ENCODE measurements at regions of chr22 and their contacts with region 1.

Region 1: GRCh38 chr22:44666207-44666585 is 35.8 kb upstream of the PRR5 start:
- DNase-seq: no peak
- H3K4me3 ChIP-seq: no peak overlapping the region
- H3K27ac ChIP-seq: no peak overlapping the region
- H3K4me1 ChIP-seq: peaks cover 4% of the 10 kb centered on the region
- H3K27me3 ChIP-seq: peaks cover 5% of the 10 kb centered on the region
- CTCF ChIP-seq: no peak

Region 2: GRCh38 chr22:43666457-43666856 is 999.7 kb before region 1 on chr22:
- CTCF ChIA-PET with region 1: no interaction called
- POLR2A ChIA-PET with region 1: interaction called, 23 read pairs
- intact Hi-C with region 1: no loop called
- DNase-seq: no peak
- H3K4me3 ChIP-seq: no peak overlapping the region
- H3K27ac ChIP-seq: no peak overlapping the region
- H3K4me1 ChIP-seq: no peaks in the 10 kb centered on the region
- H3K27me3 ChIP-seq: peaks cover 22% of the 10 kb centered on the region
- CTCF ChIP-seq: no peak